ENCODE measurements at regions of chr11 and their contacts with region 1.

Region 1: GRCh38 chr11:44718612-44719390 is 8.0 kb upstream of the TSPAN18 start:
- DNase-seq: no peak
- H3K4me3 ChIP-seq: no peak overlapping the region
- H3K27ac ChIP-seq: no peak overlapping the region
- H3K4me1 ChIP-seq: no peaks in the 10 kb centered on the region
- CTCF ChIP-seq: no peak

Region 2: DNA sequence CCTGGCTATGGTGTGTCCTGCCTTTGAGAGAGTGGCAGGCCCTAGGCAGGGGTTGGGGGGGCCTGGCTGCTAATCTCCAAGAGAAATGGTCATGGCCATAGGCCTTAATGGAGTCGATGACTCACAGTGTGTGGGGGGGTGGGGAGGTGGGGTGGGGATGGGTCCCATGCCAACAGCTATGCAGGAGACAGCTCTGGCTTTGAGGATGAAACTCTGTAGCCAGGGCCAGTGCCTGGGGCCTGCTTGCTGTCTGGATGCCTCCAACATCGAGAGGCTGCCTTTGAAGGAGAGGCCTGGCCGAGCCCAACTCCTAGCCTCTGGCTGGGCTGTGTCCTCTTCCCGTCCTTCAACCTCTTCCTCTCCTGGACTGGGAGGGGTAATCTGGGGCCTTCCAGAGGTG is 15.9 kb before region 1 on chr11:
- CTCF ChIA-PET with region 1: no interaction called
- POLR2A ChIA-PET with region 1: no interaction called
- intact Hi-C with region 1: no loop called
- DNase-seq: no peak
- H3K4me3 ChIP-seq: no peak overlapping the region
- H3K27ac ChIP-seq: no peak overlapping the region
- H3K4me1 ChIP-seq: no peaks in the 10 kb centered on the region
- CTCF ChIP-seq: no peak

Region 3: DNA sequence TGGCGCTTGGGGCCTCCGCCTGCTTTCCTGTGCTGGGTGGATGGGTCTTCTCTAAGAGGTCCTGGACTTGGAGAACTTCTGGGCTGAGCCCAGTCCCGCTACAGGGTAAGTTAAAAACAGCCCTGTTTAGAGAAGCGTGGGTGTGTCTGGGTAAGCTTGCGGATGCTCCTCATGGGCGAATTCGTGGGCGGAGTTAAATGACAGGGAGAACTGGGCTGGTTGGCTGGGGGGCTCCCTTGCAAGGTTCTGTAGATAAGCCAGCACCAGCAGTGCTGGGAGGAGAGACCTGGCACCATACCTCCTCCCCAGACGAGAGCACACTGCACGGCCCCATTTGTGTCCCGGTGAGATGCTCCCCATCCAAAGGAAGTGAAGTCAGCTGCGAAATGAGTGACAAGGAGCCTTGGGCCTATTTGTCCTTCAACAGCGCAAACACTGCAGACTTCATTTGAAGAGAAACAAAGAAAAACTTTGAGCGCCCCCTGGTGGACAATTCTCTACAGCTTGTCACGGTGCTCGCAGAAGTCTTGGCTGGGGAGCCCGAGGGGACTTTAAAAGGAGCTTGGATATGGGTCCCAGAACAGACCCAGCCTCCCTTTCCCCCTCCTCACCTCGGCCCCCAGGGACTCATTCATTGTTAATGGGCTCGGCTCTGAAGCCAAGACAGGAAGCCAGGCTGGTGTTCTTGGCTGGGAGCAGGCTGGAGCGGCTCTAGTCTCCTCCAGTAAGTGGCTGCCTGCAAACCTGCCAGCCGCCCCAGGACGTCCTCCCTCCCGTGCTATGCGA is 192.4 kb after region 1 on chr11:
- CTCF ChIA-PET with region 1: no interaction called
- POLR2A ChIA-PET with region 1: no interaction called
- intact Hi-C with region 1: loop called (anchors 5 kb)
- DNase-seq: peak; percentile 85
- H3K4me3 ChIP-seq: no peak overlapping the region
- H3K27ac ChIP-seq: no peak overlapping the region
- H3K4me1 ChIP-seq: peaks cover 6% of the 10 kb centered on the region
- CTCF ChIP-seq: peak; percentile 87